Endothelial cell of umbilical vein (primary cell): ENCODE measurements at regions of chr10 and their contacts with region 1.

Region 1: DNA sequence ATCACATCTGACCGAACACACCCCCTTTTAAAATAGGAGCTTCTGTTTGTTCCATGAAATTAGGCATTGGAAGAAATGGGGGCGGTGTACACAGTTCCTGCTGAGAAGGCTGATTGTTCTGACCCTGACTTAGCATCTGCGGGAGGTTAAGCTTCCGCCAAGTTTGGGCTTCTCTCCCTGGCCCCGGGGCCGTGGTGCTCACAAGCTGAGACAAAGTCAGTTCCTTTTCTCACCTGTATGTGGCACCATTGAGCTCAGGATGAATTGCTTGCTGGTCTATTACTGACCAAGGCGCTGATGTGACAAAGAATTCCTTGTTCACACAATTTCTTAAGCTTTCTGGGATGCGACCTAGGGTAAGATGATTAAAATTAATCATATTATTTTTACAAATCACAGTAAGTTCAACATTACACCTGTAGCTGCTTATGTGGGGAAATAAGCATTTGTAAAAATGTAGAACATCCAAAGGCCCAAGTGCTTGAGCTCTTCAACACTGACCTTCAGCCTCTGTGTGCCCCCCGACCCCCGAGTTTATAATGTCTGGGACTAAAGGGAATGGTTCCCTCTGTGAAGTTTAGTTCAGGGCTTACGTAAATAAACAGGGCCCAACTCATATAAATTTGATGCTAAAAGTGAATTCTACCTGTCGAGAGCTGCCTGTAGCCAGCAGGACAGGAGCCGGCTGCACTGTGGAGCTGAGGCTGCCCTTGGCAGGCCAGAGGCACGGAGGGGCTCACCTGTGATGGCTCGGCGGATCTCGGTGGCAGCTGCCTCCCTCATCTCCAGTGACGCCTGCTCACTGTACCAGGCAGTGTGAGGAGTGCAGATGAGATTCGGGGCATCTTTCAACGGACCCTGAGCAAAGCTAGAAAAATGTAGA is 50.8 kb downstream of the ZRANB1 start:
- DNase-seq: peak; percentile 60
- H3K4me3 ChIP-seq: no peak overlapping the region
- H3K27ac ChIP-seq: no peak overlapping the region
- H3K4me1 ChIP-seq: no peaks in the 10 kb centered on the region
- H3K27me3 ChIP-seq: no peaks in the 10 kb centered on the region
- CTCF ChIP-seq: peak; percentile 45 to 55
- POLR2A ChIP-seq: no peak

Region 2: DNA sequence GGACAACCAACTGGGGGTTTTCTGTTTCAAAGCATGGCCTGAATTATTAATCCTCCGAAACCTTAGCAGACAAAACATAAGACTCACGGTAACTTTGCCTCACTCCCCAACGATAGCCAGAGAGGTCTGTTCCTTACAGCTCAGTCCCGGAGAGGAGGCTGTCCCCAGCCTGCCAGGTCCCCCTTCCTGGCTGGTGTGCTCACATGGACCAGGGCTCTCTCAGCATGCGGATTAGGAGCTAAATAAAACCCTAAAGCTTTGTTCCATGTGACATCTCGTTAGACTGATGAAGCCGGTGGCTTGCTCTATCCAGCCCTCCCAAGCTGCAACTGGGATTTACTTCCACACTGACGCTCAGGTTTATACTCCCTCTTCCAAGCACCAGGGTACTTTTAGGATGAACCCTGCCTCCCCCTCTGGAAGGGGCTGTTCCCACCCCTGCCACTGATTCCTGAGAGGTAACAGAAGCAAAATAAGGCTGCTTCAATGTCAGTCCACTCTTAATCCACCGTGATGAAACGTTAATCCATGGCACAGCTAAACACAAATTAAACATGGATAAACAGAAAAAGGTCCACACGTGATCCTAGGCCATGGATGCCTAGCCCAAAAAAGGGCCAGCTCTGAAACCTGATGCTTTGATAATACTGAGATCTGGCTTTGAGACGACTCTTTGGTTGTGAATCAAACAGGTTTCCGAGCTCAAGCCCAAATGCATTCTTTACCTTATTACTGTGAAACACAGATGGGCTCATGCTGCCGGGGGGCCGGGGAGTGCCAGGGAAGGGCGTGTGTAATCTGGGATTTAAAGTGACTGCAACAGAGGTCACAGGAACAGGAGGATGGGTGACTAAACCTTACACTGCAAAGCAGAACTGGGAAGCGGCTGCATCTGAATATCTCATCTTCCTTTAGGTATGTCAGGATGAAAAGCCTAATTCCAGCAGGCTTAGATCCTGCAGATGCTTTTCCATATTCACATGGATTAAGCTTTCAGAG is 35.5 kb after region 1 on chr10:
- CTCF ChIA-PET with region 1: interaction called, 11 read pairs
- POLR2A ChIA-PET with region 1: no interaction called
- dilution Hi-C with region 1: no loop called
- intact Hi-C with region 1: no loop called
- DNase-seq: no peak
- H3K4me3 ChIP-seq: no peak overlapping the region
- H3K27ac ChIP-seq: no peak overlapping the region
- H3K4me1 ChIP-seq: peaks cover 9% of the 10 kb centered on the region
- H3K27me3 ChIP-seq: no peaks in the 10 kb centered on the region
- CTCF ChIP-seq: no peak
- POLR2A ChIP-seq: no peak

Region 3: GRCh38 chr10:125152450-125153368 is 160.0 kb after region 1 on chr10:
- CTCF ChIA-PET with region 1: no interaction called
- POLR2A ChIA-PET with region 1: no interaction called
- dilution Hi-C with region 1: no loop called
- intact Hi-C with region 1: loop called (anchors 1 kb)
- DNase-seq: peak; percentile 65
- H3K4me3 ChIP-seq: no peak overlapping the region
- H3K27ac ChIP-seq: peak overlapping the region; percentile 22
- H3K4me1 ChIP-seq: peaks cover 80% of the 10 kb centered on the region
- H3K27me3 ChIP-seq: no peaks in the 10 kb centered on the region
- CTCF ChIP-seq: no peak
- POLR2A ChIP-seq: no peak

Region 4: DNA sequence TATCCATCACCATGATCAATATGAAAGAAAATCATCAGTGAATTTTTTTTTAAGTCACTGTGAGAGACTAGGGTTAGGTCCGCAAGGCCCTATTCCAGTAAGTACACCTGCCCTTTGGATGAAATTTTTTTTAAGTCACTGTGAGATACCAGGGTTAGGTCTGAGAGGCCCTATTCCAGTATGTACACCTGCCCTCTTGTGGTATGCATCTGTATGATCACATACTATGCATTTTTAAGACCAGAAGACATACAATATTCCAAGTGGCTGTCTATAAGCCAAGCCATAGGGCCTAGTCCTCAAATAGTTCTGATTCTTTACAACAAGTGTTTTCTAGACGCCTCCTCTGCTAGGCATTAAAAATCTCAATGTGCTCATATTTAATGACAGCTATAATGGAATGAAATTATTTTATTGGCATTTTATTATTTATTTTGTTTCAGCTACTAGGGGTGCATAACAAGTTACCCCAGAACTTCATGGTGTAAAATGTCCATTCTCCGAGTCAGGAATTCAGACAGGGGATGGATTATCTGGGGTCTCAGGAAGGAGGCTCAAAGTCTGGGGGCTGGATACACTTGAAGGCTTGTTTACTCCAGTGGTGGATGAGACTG is 637.2 kb after region 1 on chr10:
- CTCF ChIA-PET with region 1: no interaction called
- POLR2A ChIA-PET with region 1: no interaction called
- dilution Hi-C with region 1: no loop called
- intact Hi-C with region 1: loop called (anchors 2 kb)
- DNase-seq: peak; percentile 81
- H3K4me3 ChIP-seq: no peak overlapping the region
- H3K27ac ChIP-seq: no peak overlapping the region
- H3K4me1 ChIP-seq: peaks cover 20% of the 10 kb centered on the region
- H3K27me3 ChIP-seq: no peaks in the 10 kb centered on the region
- CTCF ChIP-seq: peak; percentile 51 to 67
- POLR2A ChIP-seq: no peak